Activated CD4-positive, alpha-beta T cell treated with anti-CD3 and anti-CD28 coated beads for 36 hours (primary cell): ENCODE measurements at regions of chr17 and their contacts with region 1.

Region 1: DNA sequence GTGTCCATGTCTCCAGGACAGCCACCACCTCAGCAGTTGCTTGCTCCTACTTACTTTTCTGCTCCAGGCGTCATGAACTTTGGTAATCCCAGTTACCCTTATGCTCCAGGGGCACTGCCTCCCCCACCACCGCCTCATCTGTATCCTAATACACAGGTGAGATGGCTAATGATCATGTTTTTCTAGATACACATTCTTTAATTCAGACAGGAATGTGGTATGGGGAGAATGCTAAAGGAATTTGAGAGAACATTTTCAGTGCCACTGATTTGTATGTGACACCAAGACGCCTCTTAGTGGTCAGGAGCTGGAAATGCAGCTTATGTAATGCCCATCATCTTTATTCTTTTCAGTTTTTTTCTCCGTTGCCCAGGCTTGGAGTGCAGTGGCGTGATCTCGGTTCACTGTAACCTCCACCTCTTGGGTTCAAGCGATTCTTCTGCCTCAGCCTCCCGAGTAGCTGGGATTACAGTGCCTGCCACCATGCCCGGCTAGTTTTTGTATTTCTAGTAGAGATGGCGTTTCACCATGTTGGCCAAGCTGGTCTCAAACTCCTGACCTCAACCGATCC is 8.9 kb upstream of the RAPGEFL1 start:
- DNase-seq: peak; percentile 45
- ATAC-seq: peak; percentile 74
- H3K4me3 Mint-ChIP-seq: no peak overlapping the region
- H3K27ac Mint-ChIP-seq: peak overlapping the region; percentile 48
- H3K4me1 Mint-ChIP-seq: no peaks in the 10 kb centered on the region
- H3K27me3 Mint-ChIP-seq: no peaks in the 10 kb centered on the region

Region 2: GRCh38 chr17:40019140-40019991 is 149.0 kb before region 1 on chr17:
- CTCF ChIA-PET with region 1: interaction called, 10 read pairs
- POLR2A ChIA-PET with region 1: no interaction called
- intact Hi-C with region 1: no loop called
- DNase-seq: no peak
- ATAC-seq: no peak
- H3K4me3 Mint-ChIP-seq: no peak overlapping the region
- H3K27ac Mint-ChIP-seq: no peak overlapping the region
- H3K4me1 Mint-ChIP-seq: no peaks in the 10 kb centered on the region
- H3K27me3 Mint-ChIP-seq: no peaks in the 10 kb centered on the region

Region 3: GRCh38 chr17:40062329-40063186 is 105.8 kb before region 1 on chr17 and contains the start of gene THRA:
- CTCF ChIA-PET with region 1: interaction called, 4 read pairs
- POLR2A ChIA-PET with region 1: interaction called, 4 read pairs
- intact Hi-C with region 1: loop called in 1 of 2 experiments (anchors 5 kb)
- DNase-seq: peak; percentile 82
- ATAC-seq: peak; percentile 84
- H3K4me3 Mint-ChIP-seq: peak within 1 kb of the TSS; percentile 77
- H3K27ac Mint-ChIP-seq: peak within 1 kb of the TSS; percentile 74
- H3K4me1 Mint-ChIP-seq: peaks cover 45% of the 10 kb centered on the region
- H3K27me3 Mint-ChIP-seq: no peaks in the 10 kb centered on the region
- total RNA-seq, gene THRA: 12.9 to 13.1 TPM

Region 4: GRCh38 chr17:40121181-40122135 is 46.9 kb before region 1 on chr17 and contains the start of gene MSL1:
- CTCF ChIA-PET with region 1: interaction called, 16 read pairs
- POLR2A ChIA-PET with region 1: interaction called, 3 read pairs
- intact Hi-C with region 1: no loop called
- DNase-seq: peak; percentile 92
- ATAC-seq: peak; percentile 69
- H3K4me3 Mint-ChIP-seq: peak within 1 kb of the TSS; percentile 79
- H3K27ac Mint-ChIP-seq: peak within 1 kb of the TSS; percentile 57
- H3K4me1 Mint-ChIP-seq: peaks cover 29% of the 10 kb centered on the region
- H3K27me3 Mint-ChIP-seq: no peaks in the 10 kb centered on the region
- total RNA-seq, gene MSL1: 81.7 to 89.6 TPM

Region 5: DNA sequence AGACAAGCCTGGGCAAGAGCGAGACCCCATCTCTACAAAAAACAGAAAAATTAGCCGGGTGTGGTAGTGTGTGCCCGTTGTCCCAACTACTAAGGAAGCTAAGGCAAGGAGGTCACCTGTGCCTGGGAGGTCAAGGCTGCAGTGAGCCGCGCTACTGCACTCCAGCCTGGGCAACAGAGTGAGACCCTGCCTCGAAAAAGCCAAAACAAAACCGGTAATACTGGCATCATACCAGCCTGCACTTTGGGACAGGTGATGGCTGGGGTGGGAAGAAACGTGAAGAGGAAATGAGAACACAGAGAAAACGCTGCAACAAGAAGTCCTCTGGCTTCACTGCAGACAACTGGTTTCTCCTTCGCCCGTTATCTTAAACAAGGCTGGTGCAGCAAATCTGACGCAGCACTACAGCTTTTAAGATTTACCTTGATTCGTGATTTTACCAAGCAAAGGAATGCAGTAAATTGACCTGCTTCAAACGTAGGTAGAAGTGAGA is 28.7 kb before region 1 on chr17:
- CTCF ChIA-PET with region 1: interaction called, 10 read pairs
- POLR2A ChIA-PET with region 1: interaction called, 7 read pairs
- intact Hi-C with region 1: loop called in 1 of 2 experiments (anchors 2 kb)
- DNase-seq: no peak
- ATAC-seq: peak; percentile 5
- H3K4me3 Mint-ChIP-seq: peak overlapping the region; percentile 90
- H3K27ac Mint-ChIP-seq: peak overlapping the region; percentile 98
- H3K4me1 Mint-ChIP-seq: peaks cover 39% of the 10 kb centered on the region
- H3K27me3 Mint-ChIP-seq: no peaks in the 10 kb centered on the region

Region 6: GRCh38 chr17:40191237-40192208 is 23.2 kb after region 1 on chr17:
- CTCF ChIA-PET with region 1: interaction called, 11 read pairs
- POLR2A ChIA-PET with region 1: no interaction called
- intact Hi-C with region 1: no loop called
- DNase-seq: peak; percentile 84
- ATAC-seq: peak; percentile 91
- H3K4me3 Mint-ChIP-seq: peak overlapping the region; percentile 79
- H3K27ac Mint-ChIP-seq: peak overlapping the region; percentile 76
- H3K4me1 Mint-ChIP-seq: peaks cover 7% of the 10 kb centered on the region
- H3K27me3 Mint-ChIP-seq: no peaks in the 10 kb centered on the region